ENCODE measurements at regions of chr1 and their contacts with region 1.

Region 1: DNA sequence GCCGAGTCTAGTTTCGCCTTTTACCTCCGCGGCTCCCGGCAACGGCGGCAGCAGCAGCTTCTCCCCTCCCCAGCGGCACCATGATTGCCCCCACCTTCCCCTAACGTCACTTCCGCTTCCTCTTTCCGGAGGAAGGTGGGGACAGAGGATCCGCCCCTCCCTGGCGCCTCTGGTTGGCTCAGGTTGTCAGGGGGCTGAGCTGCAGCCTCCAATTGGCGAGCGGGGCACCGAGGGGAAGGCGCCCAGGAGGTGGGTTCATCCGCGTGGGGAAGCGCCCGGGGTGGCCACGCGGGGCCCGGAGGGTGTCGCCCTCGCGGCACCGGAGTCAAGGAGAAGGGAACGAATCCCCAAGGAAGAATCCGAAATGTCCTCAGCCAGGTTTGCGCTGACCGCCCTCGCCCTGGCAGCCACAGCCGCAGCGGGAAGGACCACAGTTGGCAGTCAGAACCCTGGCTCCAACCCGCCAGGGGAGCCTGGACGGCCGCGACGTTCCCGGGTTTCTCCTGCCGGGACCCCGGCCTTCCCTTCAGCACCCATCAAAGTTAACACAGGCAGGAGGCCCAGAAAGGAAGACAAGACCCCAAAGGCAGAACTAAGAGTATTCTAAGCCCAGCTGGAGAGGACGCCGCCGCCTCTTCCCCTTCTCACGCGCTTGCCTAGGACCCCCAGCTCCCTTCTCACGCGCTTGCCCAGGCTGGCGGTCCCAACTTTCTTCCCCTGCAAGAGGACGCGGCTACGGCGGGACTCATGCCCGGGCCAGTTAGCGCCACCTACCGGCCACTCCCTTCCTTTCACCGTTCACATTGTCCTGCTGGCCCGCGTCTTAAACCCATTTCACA is at the start of gene MTF1:
- DNase-seq: peak; percentile 98
- H3K4me3 Mint-ChIP-seq: peak within 1 kb of the TSS; percentile 85
- H3K27ac Mint-ChIP-seq: peak within 1 kb of the TSS; percentile 68
- H3K4me1 Mint-ChIP-seq: peaks cover 12% of the 10 kb centered on the region
- H3K27me3 Mint-ChIP-seq: no peaks in the 10 kb centered on the region
- CTCF ChIP-seq: peak; percentile 88
- total RNA-seq, gene MTF1: 28.4 and 34.7 TPM in 2 replicates

Region 2: DNA sequence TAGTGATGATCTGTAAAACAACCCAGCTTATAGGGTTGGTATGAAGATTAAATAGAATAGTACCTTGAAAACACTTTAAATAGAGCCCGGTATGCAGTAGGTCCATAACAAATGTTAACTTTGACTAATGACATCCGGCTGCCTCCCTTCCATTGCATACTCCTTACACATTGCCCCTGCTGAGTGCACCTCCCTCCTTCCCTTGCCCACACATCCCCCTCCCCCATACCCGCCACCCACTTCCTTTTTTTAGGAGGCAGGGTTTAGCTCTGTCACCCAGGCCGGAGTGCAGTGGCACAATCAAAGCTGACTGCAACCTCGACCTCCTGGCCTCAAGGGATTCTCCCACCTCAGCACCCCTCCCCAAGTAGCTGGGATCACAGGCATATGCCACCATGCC is 409.8 kb before region 1 on chr1:
- CTCF ChIA-PET with region 1: no interaction called
- POLR2A ChIA-PET with region 1: interaction called, 3 read pairs
- intact Hi-C with region 1: loop called (anchors 5 kb)
- DNase-seq: no peak
- H3K4me3 Mint-ChIP-seq: no peak overlapping the region
- H3K27ac Mint-ChIP-seq: peak overlapping the region; percentile 54
- H3K4me1 Mint-ChIP-seq: peaks cover 12% of the 10 kb centered on the region
- H3K27me3 Mint-ChIP-seq: no peaks in the 10 kb centered on the region
- CTCF ChIP-seq: no peak

Region 3: GRCh38 chr1:37822906-37823815 is 36.6 kb before region 1 on chr1:
- CTCF ChIA-PET with region 1: interaction called, 11 read pairs
- POLR2A ChIA-PET with region 1: interaction called, 3 read pairs
- intact Hi-C with region 1: no loop called
- DNase-seq: no peak
- H3K4me3 Mint-ChIP-seq: no peak overlapping the region
- H3K27ac Mint-ChIP-seq: no peak overlapping the region
- H3K4me1 Mint-ChIP-seq: peaks cover 10% of the 10 kb centered on the region
- H3K27me3 Mint-ChIP-seq: no peaks in the 10 kb centered on the region
- CTCF ChIP-seq: no peak

Region 4: GRCh38 chr1:37845049-37845646 is 14.6 kb before region 1 on chr1:
- CTCF ChIA-PET with region 1: interaction called, 26 read pairs
- POLR2A ChIA-PET with region 1: interaction called, 25 read pairs
- intact Hi-C with region 1: no loop called
- DNase-seq: no peak
- H3K4me3 Mint-ChIP-seq: no peak overlapping the region
- H3K27ac Mint-ChIP-seq: peak overlapping the region; percentile 68
- H3K4me1 Mint-ChIP-seq: peaks cover 34% of the 10 kb centered on the region
- H3K27me3 Mint-ChIP-seq: no peaks in the 10 kb centered on the region
- CTCF ChIP-seq: no peak

Region 5: DNA sequence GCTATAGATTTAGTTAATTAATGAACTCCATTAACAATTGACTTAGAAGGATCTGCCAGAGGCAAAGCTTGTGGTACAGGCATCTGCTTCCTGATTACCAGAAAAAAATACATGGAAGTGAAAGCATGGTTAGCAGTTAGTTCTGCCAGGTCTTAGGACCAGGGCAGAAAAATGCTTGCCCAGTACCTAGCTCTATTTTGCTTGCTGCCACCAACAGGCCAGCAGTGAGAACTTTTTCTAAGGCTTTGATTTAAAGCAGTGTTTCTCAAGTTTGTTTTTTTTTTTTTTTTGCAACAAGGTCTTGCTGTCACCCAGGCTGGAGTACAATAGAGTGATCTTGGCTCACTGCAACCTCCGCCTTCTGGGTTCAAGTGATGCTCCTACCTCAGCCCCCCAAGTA is 16.1 kb after region 1 on chr1:
- CTCF ChIA-PET with region 1: interaction called, 17 read pairs
- POLR2A ChIA-PET with region 1: interaction called, 9 read pairs
- intact Hi-C with region 1: loop called (anchors 1 kb)
- DNase-seq: peak; percentile 38
- H3K4me3 Mint-ChIP-seq: no peak overlapping the region
- H3K27ac Mint-ChIP-seq: no peak overlapping the region
- H3K4me1 Mint-ChIP-seq: no peaks in the 10 kb centered on the region
- H3K27me3 Mint-ChIP-seq: no peaks in the 10 kb centered on the region
- CTCF ChIP-seq: peak; percentile 36

Region 6: GRCh38 chr1:37931361-37932158 is 71.8 kb after region 1 on chr1:
- CTCF ChIA-PET with region 1: interaction called, 6 read pairs
- POLR2A ChIA-PET with region 1: interaction called, 25 read pairs
- intact Hi-C with region 1: no loop called
- DNase-seq: peak; percentile 98
- H3K4me3 Mint-ChIP-seq: peak overlapping the region; percentile 89
- H3K27ac Mint-ChIP-seq: peak overlapping the region; percentile 57
- H3K4me1 Mint-ChIP-seq: peaks cover 20% of the 10 kb centered on the region
- H3K27me3 Mint-ChIP-seq: no peaks in the 10 kb centered on the region
- CTCF ChIP-seq: no peak

Measured in MCF 10A (cell line).